Heart right ventricle (tissue), 16 donors: ENCODE measurements at regions of chr12 and their contacts with region 1.

Region 1: GRCh38 chr12:109775172-109775881 is 57.9 kb downstream of the TRPV4 start:
- DNase-seq: peak; percentile 73 to 79
- ATAC-seq: peak; percentile 76 to 92 (median 85)
- H3K4me3 ChIP-seq: no peak overlapping the region
- H3K27ac ChIP-seq: no peak overlapping the region
- H3K4me1 ChIP-seq: peaks cover 0 to 12% (median 6%) of the 10 kb centered on the region in 9 donors
- H3K27me3 ChIP-seq: no peaks in the 10 kb centered on the region
- CTCF ChIP-seq: peak; percentile 78 to 94 (median 87)

Region 2: DNA sequence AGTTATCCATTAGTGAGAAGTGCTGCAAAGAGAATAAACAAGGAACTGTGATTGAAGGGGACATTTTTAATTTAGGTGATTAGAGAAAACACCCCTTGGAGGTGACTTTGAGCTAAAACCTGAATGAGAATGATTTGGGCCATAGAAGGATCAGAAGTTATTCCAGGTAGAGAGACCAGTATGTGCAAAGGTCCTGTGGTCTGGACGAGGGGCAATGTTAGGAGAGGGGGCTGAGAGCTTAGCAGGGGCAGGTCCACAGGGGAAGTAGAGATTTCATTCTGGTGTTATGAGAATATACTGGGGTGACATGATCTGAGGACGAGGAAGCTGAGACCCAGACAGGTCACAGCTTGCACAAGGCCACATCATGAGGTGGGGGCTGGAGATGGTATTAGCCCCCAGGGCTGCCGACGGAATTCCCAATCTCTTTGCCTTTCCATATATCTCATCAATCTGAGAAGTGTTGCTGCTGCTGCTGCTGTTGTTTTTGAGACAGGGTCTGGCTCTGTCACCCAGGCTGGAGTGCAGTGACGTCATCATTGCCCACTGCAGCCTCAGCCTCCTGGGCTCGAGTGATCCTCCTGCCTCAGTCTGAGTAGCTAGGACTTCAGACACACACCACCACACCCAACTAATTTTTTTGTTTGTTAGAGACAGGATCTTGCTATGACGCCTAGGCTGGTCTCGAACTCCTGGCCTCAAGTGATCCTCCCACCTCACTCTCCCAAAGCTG is 353.8 kb before region 1 on chr12:
- intact Hi-C with region 1: loop called in 7 of 10 experiments (anchors 5 to 10 kb)
- DNase-seq: no peak
- ATAC-seq: no peak
- H3K4me3 ChIP-seq: no peak overlapping the region
- H3K27ac ChIP-seq: no peak overlapping the region
- H3K4me1 ChIP-seq: no peaks in the 10 kb centered on the region
- H3K27me3 ChIP-seq: peaks cover 0 to 34% (median 5%) of the 10 kb centered on the region in 7 donors
- CTCF ChIP-seq: no peak

Region 3: DNA sequence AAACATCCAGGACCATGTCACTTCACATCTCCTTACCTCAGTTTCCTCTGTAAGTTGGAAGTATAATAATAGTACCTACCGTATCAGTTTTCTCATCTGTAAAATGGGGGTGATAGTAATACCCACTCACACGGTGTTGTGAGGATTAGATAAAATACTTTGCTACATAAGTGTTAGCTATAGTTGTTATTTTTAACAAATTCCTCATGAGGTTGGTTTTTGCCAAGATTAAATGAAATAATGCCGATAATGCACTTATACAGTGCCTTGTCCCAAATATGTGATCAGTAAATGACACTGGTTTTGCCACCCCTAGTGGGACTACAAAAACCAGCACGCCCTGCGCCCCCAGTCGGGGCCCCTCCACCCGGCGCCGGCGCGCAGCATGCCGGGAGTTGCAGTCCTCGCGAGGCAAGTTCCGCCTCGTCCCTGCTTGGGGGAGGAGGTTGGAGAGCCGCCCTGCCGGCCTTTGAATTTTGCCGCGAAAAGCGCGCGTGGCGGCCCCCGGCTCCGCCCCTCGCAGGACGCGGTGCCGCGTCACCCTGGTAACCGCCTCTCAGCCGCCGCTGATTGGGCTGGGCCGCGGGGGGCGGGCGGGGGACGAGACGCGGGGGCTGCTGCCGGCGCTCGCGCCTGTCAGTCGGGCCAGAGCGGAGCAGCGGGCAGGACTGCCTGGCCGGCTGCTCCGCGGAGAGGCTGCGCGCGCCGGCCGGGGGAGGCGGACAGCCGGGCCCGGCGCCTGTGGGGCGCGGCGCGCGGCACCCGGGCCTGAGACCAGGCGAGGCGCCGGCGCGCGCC is 61.9 kb before region 1 on chr12 and contains the start of gene FAM222A:
- intact Hi-C with region 1: loop called in 7 of 10 experiments (anchors 5 to 10 kb)
- DNase-seq: peak; percentile 97 to 99
- ATAC-seq: peak; percentile 91 to 98 (median 97)
- H3K4me3 ChIP-seq: peak within 1 kb of the TSS; percentile 47 to 74 (median 70)
- H3K27ac ChIP-seq: peak within 1 kb of the TSS in 9 of 10 donors; percentile 40 to 85 (median 73)
- H3K4me1 ChIP-seq: peaks cover 5 to 57% (median 35%) of the 10 kb centered on the region in 9 donors
- H3K27me3 ChIP-seq: peaks cover 0 to 72% (median 21%) of the 10 kb centered on the region in 7 donors
- CTCF ChIP-seq: peak in 3 of 9 donors; percentile 15 to 44 (median 17)
- total RNA-seq, gene FAM222A: 3.4 to 26.0 (median 8.6) TPM

Region 4: DNA sequence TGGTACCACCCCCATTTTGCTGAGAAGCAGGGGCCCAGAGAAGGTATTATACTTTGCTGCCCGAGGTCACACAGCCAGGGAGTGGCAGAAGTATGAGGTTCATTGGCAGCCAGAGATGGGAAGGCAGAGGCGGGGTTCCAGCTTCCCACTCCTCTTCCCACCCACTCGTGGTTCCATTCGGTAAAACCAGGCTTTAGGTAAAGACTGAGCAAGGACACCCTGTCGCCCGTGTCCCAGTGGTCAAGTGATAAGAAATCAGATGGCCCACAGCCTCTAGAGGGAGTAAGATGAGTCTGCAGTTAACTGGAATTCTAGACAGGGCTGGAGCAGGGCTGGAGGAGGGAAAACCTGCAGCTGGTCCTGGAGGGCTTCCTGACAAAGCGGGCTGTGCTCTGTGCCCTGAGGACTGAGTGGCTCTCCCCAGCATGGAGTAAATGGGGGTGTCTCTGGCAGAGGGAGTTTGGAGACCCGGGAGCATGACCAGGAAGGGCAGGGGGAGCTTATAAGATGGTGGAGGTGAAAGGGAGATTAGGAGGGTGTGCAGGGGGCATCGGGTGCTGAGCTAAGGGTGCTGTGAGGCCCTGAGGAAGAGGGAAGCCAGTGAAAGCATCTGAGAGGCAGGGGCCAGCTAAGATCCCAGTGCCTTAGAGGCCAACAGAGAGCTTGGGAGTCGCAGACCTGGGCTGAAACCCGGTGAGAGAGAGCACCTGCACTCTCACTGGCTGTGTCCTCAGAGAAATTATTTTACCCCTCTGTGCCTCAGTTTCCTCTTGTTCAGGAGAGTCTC is 55.9 kb before region 1 on chr12:
- intact Hi-C with region 1: loop called in 7 of 10 experiments (anchors 5 to 10 kb)
- DNase-seq: no peak
- ATAC-seq: no peak
- H3K4me3 ChIP-seq: no peak overlapping the region
- H3K27ac ChIP-seq: peak overlapping the region; percentile 74 to 94 (median 88)
- H3K4me1 ChIP-seq: peaks cover 15 to 97% (median 58%) of the 10 kb centered on the region in 9 donors
- H3K27me3 ChIP-seq: peaks cover 0 to 49% (median 0%) of the 10 kb centered on the region in 7 donors
- CTCF ChIP-seq: peak in 1 of 9 donors; percentile 9